AG04450 (cell line): ENCODE measurements at regions of chr1 and their contacts with region 1.

Region 1: GRCh38 chr1:225999227-225999911 is at the start of gene SDE2:
- DNase-seq: peak; percentile 97
- H3K4me3 ChIP-seq: peak within 1 kb of the TSS; percentile 94
- H3K27ac ChIP-seq: peak within 1 kb of the TSS; percentile 82
- H3K27me3 ChIP-seq: peaks cover 2% of the 10 kb centered on the region
- CTCF ChIP-seq: no peak
- polyA plus RNA-seq, gene SDE2: 12.7 and 15.9 TPM in 2 replicates

Region 2: DNA sequence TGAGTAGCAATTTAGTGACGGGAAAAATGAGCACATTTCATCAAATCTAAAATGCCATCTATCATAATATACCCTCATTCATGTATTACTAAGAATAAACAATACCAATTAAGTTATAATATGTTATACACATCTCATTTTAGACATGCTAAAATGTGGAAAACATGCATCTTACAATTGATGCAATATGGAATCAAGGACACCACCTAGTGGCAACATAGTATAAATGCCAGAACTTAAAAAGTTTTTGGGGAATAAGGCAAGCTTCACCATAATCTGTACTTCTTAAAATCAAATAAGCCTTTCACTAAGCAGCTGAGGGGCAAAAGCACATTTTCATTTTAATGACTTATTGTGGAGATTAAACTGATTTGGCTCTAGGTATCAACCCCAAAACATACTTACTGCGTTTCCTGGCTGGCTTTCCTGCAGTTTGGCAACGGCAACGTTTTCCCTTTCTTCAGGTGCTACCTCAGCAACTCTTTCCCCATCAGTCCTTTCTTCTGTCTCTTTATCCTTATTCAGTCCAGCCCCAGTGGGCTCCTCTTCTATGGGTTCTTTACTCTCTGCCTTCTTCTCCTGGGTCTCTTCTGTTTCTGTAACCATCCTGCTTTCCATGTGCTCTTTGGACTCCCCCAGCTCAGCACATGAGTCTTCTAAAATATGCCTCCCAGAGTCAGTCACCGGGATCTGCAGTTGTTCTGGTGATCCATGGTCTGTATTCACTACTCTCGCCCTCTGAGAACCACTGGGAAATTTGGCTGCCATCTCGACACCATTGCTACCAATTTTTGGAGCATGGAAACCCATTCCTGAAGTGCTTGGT is 11.7 kb before region 1 on chr1:
- CTCF ChIA-PET with region 1: interaction called, 18 read pairs
- POLR2A ChIA-PET with region 1: no interaction called
- DNase-seq: peak; percentile 20
- H3K4me3 ChIP-seq: no peak overlapping the region
- H3K27ac ChIP-seq: no peak overlapping the region
- H3K27me3 ChIP-seq: no peaks in the 10 kb centered on the region
- CTCF ChIP-seq: peak; percentile 79

Region 3: DNA sequence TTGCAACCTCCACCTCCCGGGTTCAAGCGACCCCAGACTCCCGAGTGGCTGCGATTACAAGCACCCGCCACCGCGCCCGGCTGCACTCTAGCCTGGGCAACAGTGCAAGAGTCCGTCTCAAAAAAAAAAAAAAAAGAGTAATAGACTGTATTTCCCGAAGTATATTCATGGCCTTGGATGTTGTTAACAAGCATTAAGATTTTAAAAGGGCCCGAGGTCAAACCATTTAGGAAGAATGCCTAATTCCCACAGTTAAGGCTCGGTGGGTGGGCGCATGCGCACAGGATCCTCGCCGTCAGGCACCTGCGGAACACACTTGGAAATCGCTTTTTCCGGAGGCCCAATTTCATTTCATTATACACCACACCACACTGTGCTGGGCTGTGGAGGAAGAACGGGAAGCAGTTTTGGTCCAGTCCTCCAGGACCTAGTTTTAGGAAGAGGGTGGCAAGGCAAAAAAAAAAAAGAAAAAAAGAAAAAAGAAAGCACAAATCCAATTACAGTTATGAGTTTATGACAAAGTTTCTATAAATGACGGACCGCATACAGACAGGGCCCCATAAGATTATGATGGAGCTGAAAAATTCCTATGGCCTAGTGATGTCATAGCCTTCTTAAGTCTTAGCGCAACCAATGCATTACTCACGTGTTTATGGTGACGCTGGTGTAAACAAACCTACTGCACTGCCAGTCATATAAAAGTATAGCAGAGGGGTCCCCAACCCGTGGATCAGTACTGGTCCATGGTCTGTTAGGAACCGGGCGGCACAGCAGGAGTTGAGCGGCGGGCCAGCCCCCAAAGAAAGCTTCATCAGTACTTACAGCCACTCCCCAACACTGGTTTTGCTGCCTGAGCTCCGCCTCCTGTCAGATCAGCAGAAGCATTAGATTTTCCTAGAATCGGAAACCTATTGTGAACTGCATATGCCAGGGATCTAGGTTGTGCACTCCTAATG is 101.3 kb after region 1 on chr1:
- CTCF ChIA-PET with region 1: no interaction called
- POLR2A ChIA-PET with region 1: no interaction called
- DNase-seq: no peak
- H3K4me3 ChIP-seq: peak overlapping the region; percentile 46
- H3K27ac ChIP-seq: peak overlapping the region; percentile 39
- H3K27me3 ChIP-seq: peaks cover 7% of the 10 kb centered on the region
- CTCF ChIP-seq: no peak

Region 4: GRCh38 chr1:226466296-226466695 is 466.9 kb after region 1 on chr1:
- CTCF ChIA-PET with region 1: no interaction called
- POLR2A ChIA-PET with region 1: no interaction called
- DNase-seq: no peak
- H3K4me3 ChIP-seq: no peak overlapping the region
- H3K27ac ChIP-seq: no peak overlapping the region
- H3K27me3 ChIP-seq: no peaks in the 10 kb centered on the region
- CTCF ChIP-seq: no peak